Mucosa of descending colon (tissue), 3 donors: ENCODE measurements at regions of chr18 and their contacts with region 1.

Region 1: GRCh38 chr18:24726727-24727492 is 266.5 kb downstream of the HRH4 start:
- DNase-seq: peak in 2 of 3 donors; percentile 58 to 74
- ATAC-seq: peak; percentile 74
- H3K4me3 ChIP-seq: no peak overlapping the region
- H3K4me1 ChIP-seq: peaks cover 6% of the 10 kb centered on the region
- CTCF ChIP-seq: peak; percentile 71

Region 2: DNA sequence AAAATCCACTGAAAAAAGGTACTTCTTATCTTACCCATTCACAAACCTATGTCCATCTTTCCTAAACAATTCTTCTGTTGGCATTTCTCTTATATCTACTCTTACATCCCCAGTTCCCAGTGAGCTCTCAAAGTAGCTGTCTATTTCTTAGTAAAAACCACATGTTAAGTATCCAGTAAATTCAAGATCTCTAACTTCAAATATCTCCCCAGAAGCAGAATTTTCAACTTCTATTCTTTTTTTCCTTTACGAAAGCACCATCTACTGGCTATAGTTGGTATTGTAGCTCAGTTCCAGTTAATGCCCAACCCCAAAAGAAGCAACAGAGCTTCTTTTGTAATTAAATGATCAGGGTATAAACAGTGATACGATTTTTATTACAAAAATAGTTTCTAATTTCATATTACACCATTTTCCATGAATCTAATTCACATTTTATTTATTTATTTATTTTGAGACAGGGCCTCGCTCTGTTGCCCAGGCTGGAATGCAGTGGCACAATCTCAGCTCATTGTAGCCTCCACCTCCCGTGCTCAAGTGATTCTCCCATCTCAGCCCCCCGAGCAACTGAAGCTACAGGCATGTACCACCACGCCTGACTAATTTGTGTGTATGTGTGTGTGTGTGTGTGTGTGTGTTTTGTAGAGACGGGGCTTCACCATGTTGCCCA is 238.0 kb before region 1 on chr18:
- intact Hi-C with region 1: loop called in 1 of 2 experiments (anchors 5 kb)
- DNase-seq: peak in 1 of 3 donors; percentile 47
- ATAC-seq: peak; percentile 66
- H3K4me3 ChIP-seq: no peak overlapping the region
- H3K4me1 ChIP-seq: peaks cover 3% of the 10 kb centered on the region
- CTCF ChIP-seq: peak; percentile 57

Region 3: GRCh38 chr18:24584813-24585212 is 142.1 kb before region 1 on chr18:
- intact Hi-C with region 1: no loop called
- DNase-seq: no peak
- ATAC-seq: no peak
- H3K4me3 ChIP-seq: no peak overlapping the region
- H3K4me1 ChIP-seq: no peaks in the 10 kb centered on the region
- CTCF ChIP-seq: no peak

Region 4: DNA sequence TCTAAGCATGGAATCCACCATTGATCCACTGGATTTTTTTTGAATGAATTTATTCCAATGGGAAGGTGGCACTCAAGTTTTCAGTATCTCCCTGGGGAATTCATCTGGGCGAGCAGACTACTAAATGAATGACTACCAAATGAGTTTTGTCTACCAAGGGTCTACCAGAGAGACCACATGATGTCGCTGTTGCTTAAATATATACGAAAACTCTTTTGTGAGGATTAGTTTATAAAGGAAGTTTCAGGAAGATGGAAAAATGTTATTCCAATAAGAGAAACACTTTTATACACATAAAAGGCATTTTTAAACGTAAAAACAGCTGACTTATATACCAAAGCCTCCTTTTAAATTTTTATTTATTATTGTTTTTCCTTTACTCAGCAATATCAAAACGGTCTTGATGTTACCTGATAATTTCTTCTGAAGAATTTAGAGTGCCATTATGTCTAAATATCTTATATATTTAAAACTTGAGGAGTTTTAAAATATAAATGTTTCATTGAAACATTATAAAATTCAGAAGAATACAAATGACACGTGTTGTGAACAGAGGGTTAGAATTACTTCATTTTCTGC is 126.7 kb before region 1 on chr18:
- intact Hi-C with region 1: loop called in 1 of 2 experiments (anchors 5 kb)
- DNase-seq: peak in 1 of 3 donors; percentile 71
- ATAC-seq: peak; percentile 34
- H3K4me3 ChIP-seq: no peak overlapping the region
- H3K4me1 ChIP-seq: no peaks in the 10 kb centered on the region
- CTCF ChIP-seq: no peak

Region 5: DNA sequence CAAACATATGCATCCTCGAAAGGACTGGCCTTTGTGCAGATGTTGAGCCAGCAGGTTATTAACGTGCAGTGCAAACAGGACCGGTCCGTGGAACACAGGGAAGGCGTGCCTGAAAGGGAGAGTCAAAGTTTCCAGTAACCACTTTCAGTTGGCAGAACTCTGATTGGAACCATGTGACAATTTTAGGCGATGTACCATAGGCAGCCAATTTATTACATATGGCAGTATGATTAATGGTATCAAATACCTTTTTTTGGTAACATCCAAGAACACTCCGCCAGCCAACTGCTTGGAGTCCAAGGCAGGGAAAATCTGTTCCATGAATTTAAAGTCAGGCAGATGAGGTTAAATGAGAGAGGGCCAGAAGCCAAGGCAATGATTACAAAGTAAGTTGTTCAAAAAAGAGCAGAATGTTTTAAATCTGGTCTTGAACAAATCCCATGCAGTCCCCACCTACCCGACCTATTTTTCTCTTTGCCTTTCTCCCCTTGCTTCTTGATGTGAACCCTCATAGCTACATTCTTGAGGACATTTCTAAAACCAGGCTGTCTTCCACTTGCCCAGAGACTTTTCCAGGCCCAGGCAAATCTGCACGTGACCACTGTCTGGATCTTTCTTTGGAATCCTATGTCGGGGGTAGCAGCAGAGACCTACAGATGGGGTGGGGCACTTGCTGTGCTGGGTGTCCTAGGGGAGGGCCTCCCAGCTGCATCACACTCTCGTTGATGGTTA is 85.2 kb after region 1 on chr18:
- intact Hi-C with region 1: no loop called
- DNase-seq: peak in 1 of 3 donors; percentile 28
- ATAC-seq: peak; percentile 19
- H3K4me3 ChIP-seq: no peak overlapping the region
- H3K4me1 ChIP-seq: peaks cover 20% of the 10 kb centered on the region
- CTCF ChIP-seq: no peak